GM10248 (cell line): ENCODE measurements at regions of chr19 and their contacts with region 1.

Region 1: DNA sequence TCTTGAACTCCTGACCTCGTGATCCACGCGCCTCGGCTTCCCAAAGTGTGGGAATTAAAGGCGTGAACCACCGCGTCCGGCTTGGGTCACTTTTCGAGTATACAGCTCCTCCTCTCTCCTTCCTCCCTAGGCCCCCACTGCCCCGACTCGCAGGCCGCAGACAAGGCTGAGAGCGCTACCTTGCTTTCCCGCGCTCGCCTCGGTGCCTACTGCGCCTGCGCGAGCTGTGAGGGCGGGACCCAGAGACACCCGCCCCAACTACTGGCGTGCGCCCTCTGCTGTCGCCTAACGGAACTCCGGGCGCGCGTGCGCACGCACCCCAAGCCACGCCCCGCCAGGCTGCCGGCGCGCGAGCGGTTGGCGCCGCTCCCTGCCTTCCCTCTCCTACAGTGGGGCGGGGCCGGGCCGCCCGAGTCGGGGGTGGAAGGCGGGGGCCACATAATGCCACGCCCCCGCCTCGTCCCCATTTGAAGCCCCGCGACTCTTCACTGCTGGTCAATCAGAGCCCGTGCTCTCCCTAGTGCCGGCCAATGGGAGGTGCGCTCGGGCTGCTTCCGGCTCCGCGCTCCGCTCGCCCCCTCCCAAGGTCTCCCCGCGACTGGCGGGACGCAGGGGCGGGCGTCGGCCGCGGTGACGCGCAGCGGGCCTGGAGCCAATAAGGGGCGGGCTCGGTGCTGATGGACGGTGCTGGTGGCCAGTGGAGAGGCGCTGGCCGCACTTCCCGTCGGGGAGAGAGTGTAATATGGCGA is at the start of gene RAB8A:
- DNase-seq: peak; percentile 98
- CTCF ChIP-seq: peak; percentile 90

Region 2: DNA sequence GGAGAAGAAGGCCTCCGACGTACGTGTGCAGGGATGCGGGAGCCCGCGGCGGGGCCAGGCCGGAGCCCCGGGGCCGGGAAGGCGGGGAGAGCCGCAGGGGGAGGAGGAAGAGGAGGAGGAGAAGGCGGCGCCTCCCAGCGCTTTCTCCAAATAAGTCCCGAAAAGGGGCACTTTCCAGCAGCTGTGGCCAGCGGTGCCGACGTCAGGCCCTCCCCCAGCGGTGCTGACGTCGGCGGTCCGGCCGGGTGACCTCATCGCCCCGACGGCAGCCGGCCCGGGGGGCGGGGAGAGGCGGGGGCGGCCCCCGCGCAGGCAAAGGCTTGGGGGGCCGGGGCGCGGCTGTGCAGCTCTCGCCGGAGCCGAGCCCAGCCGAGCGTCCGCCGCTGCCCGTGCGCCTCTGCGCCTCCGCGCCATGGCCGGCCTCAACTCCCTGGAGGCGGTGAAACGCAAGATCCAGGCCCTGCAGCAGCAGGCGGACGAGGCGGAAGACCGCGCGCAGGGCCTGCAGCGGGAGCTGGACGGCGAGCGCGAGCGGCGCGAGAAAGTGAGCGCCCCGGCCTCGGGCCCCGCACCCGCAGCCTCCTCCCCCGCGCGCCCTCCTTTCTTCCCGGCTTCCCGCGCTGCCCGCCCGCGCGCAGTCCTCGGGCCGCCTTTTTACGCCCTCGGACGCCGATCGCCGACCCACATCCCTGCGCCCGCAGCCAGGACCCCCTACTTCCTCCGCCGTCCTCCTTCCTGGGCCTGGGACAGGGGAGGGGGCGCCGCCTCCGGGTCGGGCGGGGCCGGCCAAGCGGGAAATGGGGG is 35.0 kb before region 1 on chr19 and contains the start of gene TPM4:
- CTCF ChIA-PET with region 1: interaction called, 16 read pairs
- POLR2A ChIA-PET with region 1: no interaction called
- DNase-seq: peak; percentile 90
- CTCF ChIP-seq: no peak

Region 3: DNA sequence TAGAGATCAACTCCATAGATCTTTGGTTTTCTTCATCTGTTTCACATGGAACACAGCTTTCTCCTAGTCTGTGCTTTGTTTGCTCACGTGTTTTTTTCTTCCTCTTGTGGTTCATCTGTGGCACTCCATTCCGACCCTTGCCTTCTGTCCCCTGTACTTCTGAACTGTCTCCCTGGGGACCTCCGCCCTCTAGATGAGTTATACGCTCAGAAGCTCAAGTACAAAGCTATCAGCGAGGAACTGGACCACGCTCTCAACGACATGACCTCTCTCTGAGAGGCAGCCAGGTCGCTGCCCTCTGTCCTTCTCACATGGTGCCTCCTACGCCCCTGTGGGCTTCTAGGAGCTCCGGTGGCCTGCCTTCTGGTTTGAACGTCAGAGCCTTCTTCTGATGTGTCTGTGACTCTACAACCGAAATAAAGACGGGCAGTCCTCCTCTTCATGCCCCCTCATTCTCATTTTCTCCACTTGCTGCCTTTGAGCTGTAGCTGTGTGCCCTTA is 16.2 kb before region 1 on chr19:
- CTCF ChIA-PET with region 1: interaction called, 18 read pairs
- POLR2A ChIA-PET with region 1: interaction called, 4 read pairs
- DNase-seq: no peak
- CTCF ChIP-seq: no peak

Region 4: GRCh38 chr19:16143399-16144245 is 32.3 kb after region 1 on chr19 and contains the start of gene HSH2D:
- CTCF ChIA-PET with region 1: interaction called, 16 read pairs
- POLR2A ChIA-PET with region 1: interaction called, 11 read pairs
- DNase-seq: peak; percentile 85
- CTCF ChIP-seq: no peak